ENCODE measurements at regions of chr17 and their contacts with region 1.

Region 1: GRCh38 chr17:49987681-49988441 is 7.2 kb downstream of the DLX3 start:
- DNase-seq: no peak
- ATAC-seq: no peak
- H3K4me3 ChIP-seq: no peak overlapping the region
- H3K27ac ChIP-seq: no peak overlapping the region
- H3K4me1 ChIP-seq: no peaks in the 10 kb centered on the region
- H3K27me3 ChIP-seq: peaks cover 37 to 50% (median 49%) of the 10 kb centered on the region in 3 donors
- CTCF ChIP-seq: no peak
- POLR2A ChIP-seq: no peak

Region 2: GRCh38 chr17:49880291-49881053 is 107.4 kb before region 1 on chr17:
- in situ Hi-C with region 1: loop called in 2 of 4 experiments (anchors 10 kb)
- intact Hi-C with region 1: no loop called
- DNase-seq: peak; percentile 28 to 44
- ATAC-seq: peak; percentile 64 to 80
- H3K4me3 ChIP-seq: no peak overlapping the region
- H3K27ac ChIP-seq: no peak overlapping the region
- H3K4me1 ChIP-seq: no peaks in the 10 kb centered on the region
- H3K27me3 ChIP-seq: peaks cover 22 to 27% (median 24%) of the 10 kb centered on the region in 3 donors
- CTCF ChIP-seq: peak; percentile 80 to 97 (median 91)
- POLR2A ChIP-seq: no peak

Region 3: GRCh38 chr17:50274142-50274896 is 286.5 kb after region 1 on chr17 and contains the start of gene TMEM92:
- in situ Hi-C with region 1: no loop called
- intact Hi-C with region 1: no loop called
- DNase-seq: no peak
- ATAC-seq: no peak
- H3K4me3 ChIP-seq: peak within 1 kb of the TSS in 3 of 4 donors; percentile 54 to 69 (median 67)
- H3K27ac ChIP-seq: no peak within 1 kb of the TSS
- H3K4me1 ChIP-seq: peaks cover 0 to 8% of the 10 kb centered on the region in 2 donors
- H3K27me3 ChIP-seq: peaks cover 13 to 19% (median 18%) of the 10 kb centered on the region in 3 donors
- CTCF ChIP-seq: no peak
- POLR2A ChIP-seq: no peak
- total RNA-seq, gene TMEM92: not detected

Measured in gastrocnemius medialis (tissue), 4 donors.